Activated CD8-positive, alpha-beta T cell treated with anti-CD3 and anti-CD28 coated beads, Interleukin-2, amount 10 ng/mL, durations not matched to agents 7 days and 5 days (primary cell): ENCODE measurements at regions of chr20 and their contacts with region 1.

Region 1: DNA sequence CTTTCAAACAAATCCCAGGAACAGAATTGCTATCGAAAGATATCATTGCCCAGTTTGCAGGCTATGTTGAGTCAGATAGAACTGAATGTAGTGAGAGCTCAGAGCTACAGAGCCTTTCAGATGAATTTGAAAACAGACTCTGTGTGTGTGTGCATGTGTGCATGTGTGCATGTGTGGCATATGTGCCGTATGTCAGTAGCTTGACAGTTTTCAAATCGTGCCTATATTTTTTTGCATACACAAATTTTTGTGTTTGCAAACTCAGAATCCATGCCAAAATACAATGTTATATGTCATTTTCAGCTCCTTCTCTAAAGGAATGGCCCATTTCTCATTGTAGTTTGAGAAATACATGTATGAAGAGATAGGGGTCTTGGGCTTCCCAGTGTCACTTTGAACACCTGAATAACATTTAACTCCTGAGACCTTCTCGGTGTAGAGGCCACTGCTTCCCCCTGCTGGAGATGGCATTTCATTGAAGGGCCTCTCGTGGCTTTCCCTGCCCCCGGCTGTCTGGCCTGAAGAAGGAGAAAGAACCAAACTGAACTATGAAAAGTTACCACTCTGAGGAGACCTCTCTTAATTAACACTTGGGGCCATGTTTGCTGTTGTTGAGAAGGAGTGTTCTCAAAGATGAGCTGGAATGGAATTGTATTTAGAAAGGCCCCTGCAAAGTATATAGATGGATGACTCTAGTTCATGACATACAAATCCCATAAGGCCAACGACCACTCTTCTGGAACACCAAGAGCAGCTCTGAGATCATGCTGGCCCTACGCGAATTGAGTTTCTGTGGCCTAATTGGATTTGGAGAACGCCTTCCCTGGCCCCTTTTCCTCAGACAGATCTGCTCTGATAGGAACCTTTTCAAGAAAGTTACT is 58.7 kb downstream of the VAPB start:
- DNase-seq: peak; percentile 57
- ATAC-seq: peak; percentile 57
- H3K4me3 Mint-ChIP-seq: no peak overlapping the region
- H3K27ac Mint-ChIP-seq: no peak overlapping the region
- H3K4me1 Mint-ChIP-seq: peaks cover 13% of the 10 kb centered on the region
- H3K27me3 Mint-ChIP-seq: no peaks in the 10 kb centered on the region

Region 2: DNA sequence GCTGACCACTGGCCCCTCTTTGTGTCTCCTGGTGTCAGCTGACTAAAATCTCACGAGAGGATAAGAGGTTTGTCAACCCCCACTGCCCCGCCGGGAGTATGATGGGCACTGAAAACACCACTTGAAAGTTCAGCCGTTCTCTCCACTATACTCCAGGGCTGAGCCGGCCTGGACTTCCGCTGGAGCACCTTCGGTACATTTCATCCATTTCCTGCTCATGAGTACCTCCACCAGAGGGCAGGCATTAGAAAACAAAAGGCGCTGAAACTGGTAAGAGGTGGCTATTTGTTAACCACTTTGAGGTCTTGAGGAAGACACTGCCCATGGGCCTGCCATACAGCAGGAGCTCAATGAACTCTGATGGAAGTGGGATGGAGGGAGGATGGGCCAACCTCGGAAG is 201.4 kb before region 1 on chr20:
- CTCF ChIA-PET with region 1: interaction called, 10 read pairs
- POLR2A ChIA-PET with region 1: no interaction called
- DNase-seq: no peak
- ATAC-seq: no peak
- H3K4me3 Mint-ChIP-seq: no peak overlapping the region
- H3K27ac Mint-ChIP-seq: no peak overlapping the region
- H3K4me1 Mint-ChIP-seq: peaks cover 4% of the 10 kb centered on the region
- H3K27me3 Mint-ChIP-seq: no peaks in the 10 kb centered on the region

Region 3: DNA sequence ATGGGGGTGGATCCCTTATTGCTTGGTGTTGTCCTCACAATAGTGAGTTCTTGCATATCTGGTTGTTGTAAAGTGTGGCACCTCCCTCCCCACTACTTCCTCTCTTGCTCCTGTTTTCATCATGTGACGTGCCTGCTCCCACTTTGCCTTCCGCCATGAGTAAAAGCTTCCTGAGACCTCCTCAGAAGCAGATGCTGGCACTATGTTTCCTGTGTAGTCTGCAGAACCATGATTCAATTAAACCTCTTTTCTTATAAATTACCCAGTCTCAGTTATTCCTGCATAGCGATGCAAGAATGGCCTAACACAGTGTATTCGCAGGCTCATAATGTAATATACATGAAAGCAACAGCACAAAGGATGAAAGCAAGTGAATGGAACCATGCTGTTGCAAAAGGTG is 190.9 kb before region 1 on chr20:
- CTCF ChIA-PET with region 1: no interaction called
- POLR2A ChIA-PET with region 1: no interaction called
- DNase-seq: no peak
- ATAC-seq: no peak
- H3K4me3 Mint-ChIP-seq: no peak overlapping the region
- H3K27ac Mint-ChIP-seq: no peak overlapping the region
- H3K4me1 Mint-ChIP-seq: peaks cover 13% of the 10 kb centered on the region
- H3K27me3 Mint-ChIP-seq: no peaks in the 10 kb centered on the region